ENCODE measurements at regions of chr4 and their contacts with region 1.

Region 1: GRCh38 chr4:1403591-1404572 is 2.4 kb downstream of the NKX1-1 start:
- DNase-seq: peak; percentile 56
- H3K4me3 Mint-ChIP-seq: no peak overlapping the region
- H3K27ac Mint-ChIP-seq: peak overlapping the region; percentile 20
- H3K4me1 Mint-ChIP-seq: peaks cover 6% of the 10 kb centered on the region
- H3K27me3 Mint-ChIP-seq: peaks cover 30% of the 10 kb centered on the region

Region 2: DNA sequence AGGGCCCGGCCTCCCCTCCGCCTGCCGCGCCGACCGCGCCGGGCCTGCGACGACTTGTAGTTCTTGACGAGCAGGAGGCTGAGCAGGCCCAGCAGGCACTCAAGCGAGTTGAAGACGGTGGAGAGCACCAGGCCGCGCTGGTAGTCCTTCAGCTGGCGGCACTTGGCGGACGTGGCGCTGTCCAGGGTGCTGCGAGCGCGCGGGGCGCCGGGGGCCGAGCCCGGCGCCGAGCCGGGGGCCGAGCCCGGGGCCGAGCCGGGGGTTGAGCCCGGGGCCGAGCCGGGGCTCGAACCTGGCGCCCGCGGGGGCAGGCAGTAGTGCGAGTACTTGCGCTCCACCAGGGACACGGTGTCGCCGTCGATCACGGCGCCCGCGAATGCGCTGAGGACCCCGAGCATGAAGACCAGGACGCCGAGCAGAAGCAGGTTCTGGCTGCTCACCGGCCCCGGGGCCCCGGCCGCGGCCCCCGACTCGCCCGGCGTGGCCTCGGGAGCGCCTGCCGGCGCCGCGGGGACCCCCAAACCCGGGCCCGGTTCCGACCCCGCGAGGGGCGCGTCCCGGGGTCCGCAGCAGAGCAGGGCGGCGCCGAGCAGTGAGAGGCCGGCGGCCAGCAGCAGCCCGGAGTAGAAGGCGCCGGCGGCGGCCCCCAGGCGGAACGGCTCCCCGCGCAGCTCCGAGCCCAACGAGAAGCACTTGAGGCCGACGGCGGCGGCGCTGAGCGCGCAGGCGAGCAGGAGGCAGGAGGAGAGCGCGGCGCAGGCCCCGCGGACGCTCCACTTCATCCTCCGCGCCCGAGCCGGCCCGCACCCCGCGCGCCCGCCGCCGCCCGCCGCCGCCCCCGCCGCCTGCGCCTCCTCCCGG is 828.4 kb before region 1 on chr4:
- intact Hi-C with region 1: loop called (anchors 10 kb)
- DNase-seq: no peak
- H3K4me3 Mint-ChIP-seq: no peak overlapping the region
- H3K27ac Mint-ChIP-seq: no peak overlapping the region
- H3K4me1 Mint-ChIP-seq: peaks cover 4% of the 10 kb centered on the region
- H3K27me3 Mint-ChIP-seq: peaks cover 44% of the 10 kb centered on the region

Region 3: GRCh38 chr4:1492651-1493537 is 89.0 kb after region 1 on chr4:
- intact Hi-C with region 1: no loop called
- DNase-seq: no peak
- H3K4me3 Mint-ChIP-seq: no peak overlapping the region
- H3K27ac Mint-ChIP-seq: no peak overlapping the region
- H3K4me1 Mint-ChIP-seq: no peaks in the 10 kb centered on the region
- H3K27me3 Mint-ChIP-seq: no peaks in the 10 kb centered on the region

Region 4: GRCh38 chr4:1512738-1513660 is 109.1 kb after region 1 on chr4:
- intact Hi-C with region 1: no loop called
- DNase-seq: peak; percentile 81
- H3K4me3 Mint-ChIP-seq: no peak overlapping the region
- H3K27ac Mint-ChIP-seq: no peak overlapping the region
- H3K4me1 Mint-ChIP-seq: no peaks in the 10 kb centered on the region
- H3K27me3 Mint-ChIP-seq: no peaks in the 10 kb centered on the region

Measured in activated CD4-positive, alpha-beta T cell treated with anti-CD3 and anti-CD28 coated beads, Interleukin-2, amount 10 ng/mL, durations not matched to agents 24 days and 14 days (primary cell).